ENCODE measurements at regions of chr17 and their contacts with region 1.

Region 1: GRCh38 chr17:77140166-77140878 is 447 bp upstream of the SEC14L1 start:
- DNase-seq: peak; percentile 100
- ATAC-seq: peak; percentile 88
- H3K4me3 Mint-ChIP-seq: peak overlapping the region; percentile 75
- H3K27ac Mint-ChIP-seq: peak overlapping the region; percentile 94
- H3K4me1 Mint-ChIP-seq: peaks cover 55% of the 10 kb centered on the region
- H3K27me3 Mint-ChIP-seq: no peaks in the 10 kb centered on the region
- CTCF ChIP-seq: no peak

Region 2: GRCh38 chr17:76737082-76737675 is 403.1 kb before region 1 on chr17 and contains the start of gene SRSF2:
- CTCF ChIA-PET with region 1: no interaction called
- POLR2A ChIA-PET with region 1: no interaction called
- intact Hi-C with region 1: loop called (anchors 1 kb)
- DNase-seq: peak; percentile 99
- ATAC-seq: peak; percentile 74
- H3K4me3 Mint-ChIP-seq: peak within 1 kb of the TSS; percentile 97
- H3K27ac Mint-ChIP-seq: peak within 1 kb of the TSS; percentile 96
- H3K4me1 Mint-ChIP-seq: peaks cover 50% of the 10 kb centered on the region
- H3K27me3 Mint-ChIP-seq: no peaks in the 10 kb centered on the region
- CTCF ChIP-seq: no peak
- total RNA-seq, gene SRSF2: 335 and 367 TPM in 2 replicates

Region 3: DNA sequence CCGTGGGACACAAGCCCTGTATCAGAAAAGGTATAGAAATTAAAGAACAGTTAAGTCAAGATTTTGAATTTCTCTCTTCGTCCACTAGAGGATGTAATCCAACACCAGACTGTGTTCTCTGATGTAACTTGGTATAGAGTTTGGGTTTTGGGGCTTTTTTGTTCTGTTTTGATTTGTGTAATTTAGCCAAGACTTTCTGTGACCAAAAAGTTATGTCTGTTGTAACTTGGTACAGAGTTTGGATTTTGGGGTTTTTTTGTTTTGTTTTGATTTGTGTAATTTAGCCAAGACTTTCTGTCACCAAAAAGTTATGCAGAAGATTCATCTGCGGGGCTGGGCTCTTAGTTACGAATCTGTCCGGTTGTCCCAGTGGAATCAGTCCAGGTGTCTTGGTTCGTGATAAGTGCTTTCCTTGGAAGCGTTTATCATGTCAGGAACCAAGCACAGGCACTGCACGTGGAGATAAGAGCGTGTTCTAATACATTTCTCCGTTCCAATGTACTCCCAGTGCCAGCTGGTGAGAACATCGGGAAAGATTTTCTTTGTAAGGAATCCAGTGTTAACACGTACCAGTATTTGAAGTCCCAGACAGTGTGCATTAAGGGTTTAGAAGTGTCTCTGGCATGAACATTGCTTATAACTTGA is 43.6 kb before region 1 on chr17:
- CTCF ChIA-PET with region 1: no interaction called
- POLR2A ChIA-PET with region 1: interaction called, 8 read pairs
- intact Hi-C with region 1: loop called (anchors 2 kb)
- DNase-seq: no peak
- ATAC-seq: peak; percentile 56
- H3K4me3 Mint-ChIP-seq: no peak overlapping the region
- H3K27ac Mint-ChIP-seq: peak overlapping the region; percentile 50
- H3K4me1 Mint-ChIP-seq: peaks cover 21% of the 10 kb centered on the region
- H3K27me3 Mint-ChIP-seq: no peaks in the 10 kb centered on the region
- CTCF ChIP-seq: no peak

Region 4: DNA sequence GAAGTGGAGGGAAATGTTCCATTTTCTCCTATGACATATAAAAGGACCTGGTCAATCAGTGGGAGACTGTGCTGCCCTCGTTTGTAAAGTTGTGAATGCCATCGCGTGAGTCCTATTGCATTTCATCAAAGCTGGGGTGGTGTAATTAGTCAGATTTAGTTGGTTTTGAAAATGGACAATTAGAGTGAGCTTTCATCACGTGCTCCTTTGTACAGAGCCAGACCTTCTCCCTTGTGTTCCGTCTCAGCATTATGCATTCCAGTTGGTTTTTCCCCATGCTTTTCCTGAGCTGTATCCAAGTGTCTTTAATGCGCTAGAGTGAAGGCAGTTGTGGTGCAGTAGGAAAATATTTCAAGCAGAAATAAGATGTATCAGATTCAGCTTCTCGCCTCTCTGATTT is 10.9 kb after region 1 on chr17:
- CTCF ChIA-PET with region 1: no interaction called
- POLR2A ChIA-PET with region 1: interaction called, 11 read pairs
- intact Hi-C with region 1: no loop called
- DNase-seq: no peak
- ATAC-seq: no peak
- H3K4me3 Mint-ChIP-seq: no peak overlapping the region
- H3K27ac Mint-ChIP-seq: no peak overlapping the region
- H3K4me1 Mint-ChIP-seq: peaks cover 46% of the 10 kb centered on the region
- H3K27me3 Mint-ChIP-seq: no peaks in the 10 kb centered on the region
- CTCF ChIP-seq: no peak

Region 5: DNA sequence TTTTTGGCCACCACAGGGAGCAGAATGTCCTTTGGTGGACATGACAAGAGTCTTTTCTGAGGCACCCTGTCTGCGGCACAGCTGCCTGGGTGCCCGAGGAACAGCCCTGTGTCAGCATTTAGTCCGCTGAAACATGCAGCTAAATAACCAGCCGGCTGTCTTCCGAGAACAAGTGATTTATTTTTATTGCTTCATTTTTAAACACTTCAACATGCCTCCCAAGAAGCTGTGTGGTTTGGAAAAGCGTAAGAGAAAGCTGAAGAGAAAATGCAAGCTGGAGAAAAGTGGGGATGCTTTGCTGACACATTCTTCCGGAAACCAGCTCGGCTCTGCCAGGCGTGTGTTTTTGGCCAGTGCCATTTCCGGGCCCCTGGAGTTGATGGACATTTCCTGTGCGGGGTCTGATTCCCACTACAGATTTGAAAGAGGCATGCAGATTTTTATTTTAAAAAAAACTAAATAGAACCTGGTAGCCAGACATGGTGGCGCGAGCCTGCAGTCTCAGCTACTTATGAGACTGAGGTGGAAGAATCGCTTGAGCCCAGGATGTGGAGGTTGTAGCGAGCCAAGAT is 95.1 kb after region 1 on chr17:
- CTCF ChIA-PET with region 1: no interaction called
- POLR2A ChIA-PET with region 1: interaction called, 13 read pairs
- intact Hi-C with region 1: no loop called
- DNase-seq: no peak
- ATAC-seq: no peak
- H3K4me3 Mint-ChIP-seq: peak overlapping the region; percentile 59
- H3K27ac Mint-ChIP-seq: no peak overlapping the region
- H3K4me1 Mint-ChIP-seq: peaks cover 19% of the 10 kb centered on the region
- H3K27me3 Mint-ChIP-seq: peaks cover 3% of the 10 kb centered on the region
- CTCF ChIP-seq: no peak

Region 6: GRCh38 chr17:77444984-77445759 is 304.9 kb after region 1 on chr17:
- CTCF ChIA-PET with region 1: no interaction called
- POLR2A ChIA-PET with region 1: interaction called, 13 read pairs
- intact Hi-C with region 1: no loop called
- DNase-seq: peak; percentile 70
- ATAC-seq: peak; percentile 45
- H3K4me3 Mint-ChIP-seq: peak overlapping the region; percentile 80
- H3K27ac Mint-ChIP-seq: peak overlapping the region; percentile 94
- H3K4me1 Mint-ChIP-seq: peaks cover 96% of the 10 kb centered on the region
- H3K27me3 Mint-ChIP-seq: no peaks in the 10 kb centered on the region
- CTCF ChIP-seq: no peak

Region 7: DNA sequence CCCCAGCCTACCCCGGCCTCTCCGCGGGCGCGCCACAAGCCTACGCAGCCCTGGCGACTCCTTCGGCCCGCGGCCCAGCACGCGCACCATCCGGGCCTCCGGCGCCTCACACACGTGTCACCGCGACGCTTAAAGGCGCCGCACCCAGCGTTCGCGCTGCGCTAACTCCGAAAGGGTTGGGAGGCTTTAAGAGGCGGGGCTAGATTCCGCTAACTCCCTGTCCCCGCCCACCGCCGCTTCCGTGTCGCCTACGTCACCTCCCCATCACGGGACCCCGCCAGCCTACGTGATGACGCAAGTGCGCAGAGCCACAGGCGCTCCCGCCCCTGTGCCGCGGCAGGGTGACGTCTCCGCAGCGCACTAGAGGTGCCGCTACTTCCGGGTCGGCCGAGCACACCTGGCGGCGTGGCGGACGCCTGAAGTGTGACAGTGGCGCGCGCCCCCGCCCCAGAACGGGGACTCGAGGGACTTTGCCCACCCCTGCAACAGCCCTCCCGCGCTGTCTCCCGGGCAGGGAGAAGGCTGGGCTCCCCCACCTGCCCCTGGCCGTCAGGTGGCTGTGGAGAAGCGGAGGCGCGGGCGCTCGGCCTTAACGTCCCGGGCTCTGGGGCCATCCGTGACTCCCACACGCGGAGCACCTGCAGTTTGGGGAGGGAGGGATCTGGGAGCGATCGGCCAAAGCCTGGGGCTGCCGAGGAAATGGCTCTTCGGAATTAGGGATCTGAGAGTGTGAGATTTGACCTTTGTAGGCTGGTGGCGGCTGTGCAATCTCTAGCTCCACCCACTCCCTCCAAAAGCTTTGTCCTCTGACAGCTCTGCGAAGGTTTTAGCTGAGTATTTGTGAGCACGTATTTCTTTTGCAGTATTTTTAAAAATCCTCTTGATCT is 1700.6 kb after region 1 on chr17 and contains the start of gene USP36:
- CTCF ChIA-PET with region 1: no interaction called
- POLR2A ChIA-PET with region 1: no interaction called
- intact Hi-C with region 1: loop called (anchors 2 kb)
- DNase-seq: peak; percentile 99
- ATAC-seq: peak; percentile 85
- H3K4me3 Mint-ChIP-seq: peak within 1 kb of the TSS; percentile 93
- H3K27ac Mint-ChIP-seq: peak within 1 kb of the TSS; percentile 94
- H3K4me1 Mint-ChIP-seq: peaks cover 42% of the 10 kb centered on the region
- H3K27me3 Mint-ChIP-seq: no peaks in the 10 kb centered on the region
- CTCF ChIP-seq: no peak
- total RNA-seq, gene USP36: 93.8 and 107 TPM in 2 replicates

Measured in activated B cell treated with CpG ODN at 0.5 μM for 24 hours (primary cell).